Left colon (tissue), 2 donors: ENCODE measurements at regions of chr16 and their contacts with region 1.

Region 1: GRCh38 chr16:55842369-55843104 is 9.6 kb upstream of the CES1 start:
- DNase-seq: no peak
- ATAC-seq: peak; percentile 45

Region 2: GRCh38 chr16:55478827-55479429 is 363.6 kb before region 1 on chr16 and contains the start of gene MMP2:
- intact Hi-C with region 1: loop called in 1 of 2 experiments (anchors 10 kb)
- DNase-seq: peak; percentile 31 to 56
- ATAC-seq: no peak
- total RNA-seq, gene MMP2: 57.5 to 136 TPM

Region 3: DNA sequence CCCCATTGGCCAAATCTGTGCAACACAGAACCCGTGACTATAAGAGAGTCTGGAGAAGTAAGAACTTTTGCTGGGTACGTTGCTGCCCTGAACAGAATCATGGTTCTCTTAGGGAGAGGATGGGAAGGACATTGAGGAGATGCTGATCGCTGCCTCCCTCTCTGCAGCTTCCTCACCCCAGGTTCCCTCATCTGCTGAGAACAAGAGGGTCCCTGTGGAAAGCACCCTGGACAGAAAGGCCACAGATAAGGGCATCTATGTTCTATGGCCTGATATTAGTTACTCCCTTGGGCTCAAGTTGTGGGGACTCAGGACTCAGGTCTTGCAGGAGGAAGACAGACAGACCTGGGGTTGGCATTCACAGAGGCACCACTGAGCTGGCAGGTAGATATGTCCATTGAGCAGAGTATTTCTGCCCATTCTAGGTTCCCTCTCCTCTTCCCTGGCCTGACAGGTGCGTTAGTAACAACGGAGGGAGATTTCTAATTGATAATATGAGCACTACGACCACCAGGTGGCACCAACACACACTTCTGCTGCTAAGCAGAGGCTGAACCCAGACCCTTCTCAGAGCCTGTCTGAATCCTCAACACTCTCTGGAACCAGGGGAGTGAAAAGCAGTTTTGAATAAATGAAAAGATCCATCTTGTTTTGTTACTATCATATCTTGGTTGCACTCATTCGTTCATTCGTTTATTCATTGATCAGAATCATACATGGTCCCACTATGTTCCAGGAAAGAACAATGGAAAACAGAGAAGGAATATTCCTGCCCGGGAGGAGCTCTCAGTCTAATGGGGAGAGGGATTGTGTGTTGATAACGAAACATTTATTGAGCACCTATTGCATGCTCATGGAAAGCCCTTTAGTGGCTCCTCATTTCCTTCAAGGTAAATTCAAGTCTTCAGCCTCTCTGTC is 130.3 kb before region 1 on chr16:
- intact Hi-C with region 1: loop called (anchors 5 kb)
- DNase-seq: peak in 1 of 2 donors; percentile 81
- ATAC-seq: peak; percentile 59